PC-9 (cell line): ENCODE measurements at regions of chr2 and their contacts with region 1.

Region 1: DNA sequence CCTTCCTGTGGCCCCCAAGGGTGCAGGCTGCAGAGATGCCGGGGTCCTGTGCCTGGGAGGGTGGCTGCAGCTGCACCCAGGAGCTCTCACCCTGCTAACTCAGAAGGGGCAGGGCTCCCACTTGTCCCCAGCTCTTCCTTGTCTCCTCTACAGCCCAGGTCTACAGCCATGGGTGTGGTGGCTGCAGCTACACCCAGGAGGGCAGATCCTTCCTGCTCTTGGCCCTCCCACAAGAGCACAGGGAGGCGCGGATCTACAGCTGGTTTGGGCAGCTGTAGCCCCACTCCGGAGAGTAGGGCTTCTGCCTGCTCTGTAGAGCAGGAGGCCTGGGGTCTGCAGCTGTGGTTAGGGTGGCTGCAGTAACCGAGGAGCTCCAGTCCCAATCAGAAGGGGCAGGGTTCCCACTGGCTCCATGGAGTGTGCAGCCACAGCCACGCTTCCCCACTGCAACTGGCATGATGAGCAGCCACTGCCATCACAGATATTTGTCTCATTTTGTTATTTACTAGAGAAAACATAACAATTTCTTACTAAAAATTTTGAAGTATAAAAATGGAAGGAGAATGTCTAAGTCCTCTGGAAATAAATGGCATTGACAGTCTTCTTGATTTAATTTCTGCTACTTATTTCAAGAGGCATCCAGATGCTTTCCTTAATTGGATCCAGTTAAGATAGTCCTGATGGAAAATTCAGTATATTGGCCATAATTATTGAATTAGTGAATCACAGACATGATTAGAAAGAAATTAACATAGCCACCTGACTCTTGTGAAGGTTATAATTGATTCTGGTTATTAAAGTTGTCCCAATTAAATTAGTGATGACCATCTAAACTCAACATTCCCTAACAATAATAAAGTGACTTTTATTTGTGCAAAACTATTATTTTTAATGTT is 233.6 kb downstream of the KCNE4 start:
- DNase-seq: no peak
- H3K4me3 ChIP-seq: no peak overlapping the region
- H3K27ac ChIP-seq: no peak overlapping the region
- H3K4me1 ChIP-seq: no peaks in the 10 kb centered on the region
- H3K27me3 ChIP-seq: no peaks in the 10 kb centered on the region
- CTCF ChIP-seq: no peak

Region 2: DNA sequence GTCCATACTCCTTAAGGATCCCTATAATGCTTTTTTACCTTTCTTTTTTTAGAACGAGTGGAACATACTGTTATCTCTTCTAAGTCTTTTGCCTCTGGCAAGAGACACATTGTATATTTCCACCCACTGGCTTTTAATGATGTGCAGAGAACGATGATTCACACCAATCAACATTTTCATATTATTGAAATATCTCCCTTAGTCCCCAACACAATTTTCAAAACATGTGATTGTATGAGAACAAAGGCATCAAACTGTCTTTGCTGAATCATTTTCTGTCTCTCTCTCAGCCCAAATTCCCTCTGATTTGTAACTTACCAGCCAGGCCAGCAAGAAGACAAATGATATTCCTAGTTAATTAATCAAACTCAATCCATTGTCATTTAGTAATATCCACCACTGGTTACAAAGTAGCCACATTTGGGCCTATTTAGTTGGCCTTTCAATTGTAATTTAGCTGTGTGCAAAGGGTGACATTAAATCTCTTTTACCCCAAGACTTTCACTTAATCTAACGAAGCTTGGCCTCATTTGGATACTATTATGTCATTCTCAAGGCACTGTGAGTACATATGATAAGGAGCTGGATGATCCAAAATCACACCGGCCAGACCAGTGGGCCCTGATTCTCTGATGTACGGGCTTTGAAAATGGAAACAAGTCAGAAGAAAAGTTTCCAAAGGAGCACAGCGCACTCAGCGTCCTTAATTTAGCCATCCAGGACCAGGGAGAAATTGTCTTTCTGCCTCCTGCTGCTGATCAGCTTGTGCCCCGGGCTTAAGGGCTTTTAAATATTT is 131.4 kb after region 1 on chr2:
- CTCF ChIA-PET with region 1: interaction called, 11 read pairs
- POLR2A ChIA-PET with region 1: no interaction called
- intact Hi-C with region 1: no loop called
- DNase-seq: no peak
- H3K4me3 ChIP-seq: no peak overlapping the region
- H3K27ac ChIP-seq: no peak overlapping the region
- H3K4me1 ChIP-seq: no peaks in the 10 kb centered on the region
- H3K27me3 ChIP-seq: no peaks in the 10 kb centered on the region
- CTCF ChIP-seq: no peak